ENCODE measurements at regions of chr1 and their contacts with region 1.

Region 1: GRCh38 chr1:236103646-236104218 is 38.6 kb upstream of the GPR137B start:
- DNase-seq: peak; percentile 50 to 58 (median 56)
- H3K4me3 ChIP-seq: no peak overlapping the region
- H3K4me3 Mint-ChIP-seq: peak overlapping the region in 1 of 2 donors; percentile 36
- H3K27ac ChIP-seq: no peak overlapping the region
- H3K27ac Mint-ChIP-seq: peak overlapping the region in 1 of 7 donors; percentile 14
- H3K4me1 ChIP-seq: peaks cover 0 to 2% of the 10 kb centered on the region in 2 donors
- H3K4me1 Mint-ChIP-seq: peaks cover 4% of the 10 kb centered on the region
- H3K27me3 ChIP-seq: no peaks in the 10 kb centered on the region
- H3K27me3 Mint-ChIP-seq: peaks cover 0 to 2% (median 2%) of the 10 kb centered on the region in 3 donors
- CTCF ChIP-seq: peak; percentile 82

Region 2: GRCh38 chr1:235910357-235911299 is 193.1 kb before region 1 on chr1:
- intact Hi-C with region 1: no loop called
- DNase-seq: peak; percentile 56 to 84 (median 72)
- H3K4me3 ChIP-seq: no peak overlapping the region
- H3K4me3 Mint-ChIP-seq: no peak overlapping the region
- H3K27ac ChIP-seq: no peak overlapping the region
- H3K27ac Mint-ChIP-seq: peak overlapping the region in 2 of 7 donors; percentile 25 to 78
- H3K4me1 ChIP-seq: peaks cover 21 to 32% of the 10 kb centered on the region in 2 donors
- H3K4me1 Mint-ChIP-seq: peaks cover 41% of the 10 kb centered on the region
- H3K27me3 ChIP-seq: no peaks in the 10 kb centered on the region
- H3K27me3 Mint-ChIP-seq: peaks cover 0 to 3% (median 2%) of the 10 kb centered on the region in 3 donors
- CTCF ChIP-seq: no peak

Region 3: GRCh38 chr1:236281654-236282424 is 178.1 kb after region 1 on chr1 and contains the start of gene ERO1B:
- intact Hi-C with region 1: loop called in 1 of 2 experiments (anchors 10 kb)
- DNase-seq: peak; percentile 93 to 95 (median 94)
- H3K4me3 ChIP-seq: peak within 1 kb of the TSS; percentile 85 to 86 (median 86)
- H3K4me3 Mint-ChIP-seq: peak within 1 kb of the TSS; percentile 96 to 97
- H3K27ac ChIP-seq: peak within 1 kb of the TSS; percentile 8 to 86
- H3K27ac Mint-ChIP-seq: peak within 1 kb of the TSS; percentile 62 to 89 (median 85)
- H3K4me1 ChIP-seq: peaks cover 29 to 35% of the 10 kb centered on the region in 2 donors
- H3K4me1 Mint-ChIP-seq: peaks cover 45% of the 10 kb centered on the region
- H3K27me3 ChIP-seq: no peaks in the 10 kb centered on the region
- H3K27me3 Mint-ChIP-seq: peaks cover 0 to 3% (median 2%) of the 10 kb centered on the region in 3 donors
- CTCF ChIP-seq: no peak
- polyA plus RNA-seq, gene ERO1B: 2.7 to 4.2 (median 3.2) TPM

Region 4: DNA sequence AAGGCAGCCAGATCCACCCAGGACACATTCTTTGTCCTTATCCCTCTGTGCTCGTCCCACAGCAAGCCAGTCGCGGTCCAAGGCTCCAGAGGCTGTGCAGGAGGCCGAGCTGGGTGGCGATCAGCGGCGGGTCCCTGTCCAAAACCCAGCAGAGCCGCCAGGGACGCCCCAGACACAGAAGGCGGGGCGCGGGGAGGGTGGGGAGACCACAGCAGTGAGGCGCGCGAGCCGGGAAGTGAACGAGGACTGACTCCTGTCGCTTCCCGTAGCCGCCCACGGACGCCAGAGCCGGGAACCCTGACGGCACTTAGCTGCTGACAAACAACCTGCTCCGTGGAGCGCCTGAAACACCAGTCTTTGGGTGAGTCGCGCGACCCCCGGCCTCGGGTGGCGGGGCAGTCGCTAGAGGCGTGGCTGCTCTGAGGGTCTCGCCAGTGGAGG is 420.0 kb after region 1 on chr1 and contains the start of gene LGALS8:
- intact Hi-C with region 1: loop called (anchors 10 kb)
- DNase-seq: peak; percentile 77 to 82 (median 81)
- H3K4me3 ChIP-seq: peak within 1 kb of the TSS; percentile 91 to 96 (median 93)
- H3K4me3 Mint-ChIP-seq: peak within 1 kb of the TSS; percentile 92 to 99
- H3K27ac ChIP-seq: peak within 1 kb of the TSS; percentile 98
- H3K27ac Mint-ChIP-seq: peak within 1 kb of the TSS; percentile 96 to 99 (median 97)
- H3K4me1 ChIP-seq: peaks cover 16 to 26% of the 10 kb centered on the region in 2 donors
- H3K4me1 Mint-ChIP-seq: peaks cover 29% of the 10 kb centered on the region
- H3K27me3 ChIP-seq: no peaks in the 10 kb centered on the region
- H3K27me3 Mint-ChIP-seq: no peaks in the 10 kb centered on the region
- CTCF ChIP-seq: no peak
- polyA plus RNA-seq, gene LGALS8: 58.9 to 84.6 (median 75.7) TPM

Region 5: GRCh38 chr1:237386362-237387143 is 1282.8 kb after region 1 on chr1:
- intact Hi-C with region 1: loop called in 1 of 2 experiments (anchors 10 kb)
- DNase-seq: no peak
- H3K4me3 ChIP-seq: no peak overlapping the region
- H3K4me3 Mint-ChIP-seq: no peak overlapping the region
- H3K27ac ChIP-seq: no peak overlapping the region
- H3K27ac Mint-ChIP-seq: no peak overlapping the region
- H3K4me1 ChIP-seq: no peaks in the 10 kb centered on the region
- H3K4me1 Mint-ChIP-seq: peaks cover 2% of the 10 kb centered on the region
- H3K27me3 ChIP-seq: no peaks in the 10 kb centered on the region
- H3K27me3 Mint-ChIP-seq: peaks cover 0 to 2% (median 1%) of the 10 kb centered on the region in 3 donors
- CTCF ChIP-seq: peak; percentile 49